Common myeloid progenitor, CD34-positive (primary cell): ENCODE measurements at regions of chr19 and their contacts with region 1.

Region 1: DNA sequence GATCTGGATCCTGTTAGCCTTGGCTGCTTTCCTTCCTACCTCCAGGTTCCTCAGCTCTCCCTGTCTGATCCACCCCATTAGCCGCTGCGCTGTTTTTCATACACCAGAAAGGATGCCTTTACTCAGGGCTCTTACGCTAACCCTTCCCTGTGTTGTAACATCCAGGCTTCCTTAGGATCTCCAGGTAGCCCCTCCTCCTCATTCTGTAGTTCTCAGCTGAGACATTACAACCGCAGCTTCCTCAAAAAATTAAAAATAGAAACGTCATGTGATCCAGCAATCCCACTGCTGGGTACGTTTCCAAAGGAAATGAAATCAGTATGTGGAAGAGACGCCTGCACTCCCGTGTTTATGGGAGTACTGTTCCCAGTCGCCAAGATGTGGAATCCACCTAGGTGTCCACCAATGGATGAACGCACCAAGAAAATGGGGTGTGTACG is 18.4 kb upstream of the MYADM start:
- DNase-seq: peak in 2 of 3 donors; percentile 61 to 66
- H3K4me3 ChIP-seq: peak overlapping the region in 2 of 7 experiments; percentile 26 to 36
- H3K27ac ChIP-seq: no peak overlapping the region
- H3K4me1 ChIP-seq: peaks cover 10 to 21% (median 13%) of the 10 kb centered on the region in 4 experiments
- H3K27me3 ChIP-seq: peaks cover 0 to 23% (median 3%) of the 10 kb centered on the region in 5 experiments

Region 2: GRCh38 chr19:53707277-53707676 is 142.0 kb before region 1 on chr19:
- CTCF ChIA-PET with region 1: no interaction called
- POLR2A ChIA-PET with region 1: no interaction called
- DNase-seq: no peak
- H3K4me3 ChIP-seq: no peak overlapping the region
- H3K27ac ChIP-seq: no peak overlapping the region
- H3K4me1 ChIP-seq: no peaks in the 10 kb centered on the region
- H3K27me3 ChIP-seq: peaks cover 0 to 6% (median 0%) of the 10 kb centered on the region in 5 experiments

Region 3: DNA sequence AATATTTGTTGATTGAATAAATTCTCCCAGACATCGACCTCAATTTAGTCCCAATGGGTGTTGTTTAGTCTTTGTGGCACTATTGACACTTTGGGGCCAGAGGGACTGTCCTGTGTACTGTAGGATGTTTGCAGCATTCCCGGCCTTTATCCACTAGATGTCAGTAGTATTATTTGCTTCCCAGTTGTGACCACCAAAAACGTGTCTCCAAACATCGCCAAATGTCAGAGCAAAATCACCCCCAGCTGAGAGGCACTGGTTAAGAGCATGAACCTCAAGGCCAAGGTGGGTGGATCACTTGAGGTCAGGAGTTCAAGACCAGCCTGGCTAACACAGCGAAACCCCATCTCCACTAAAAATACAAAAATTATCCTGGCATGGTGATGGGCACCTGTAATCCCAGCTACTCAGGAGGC is 40.5 kb before region 1 on chr19:
- CTCF ChIA-PET with region 1: no interaction called
- POLR2A ChIA-PET with region 1: no interaction called
- DNase-seq: peak; percentile 37 to 65 (median 64)
- H3K4me3 ChIP-seq: no peak overlapping the region
- H3K27ac ChIP-seq: no peak overlapping the region
- H3K4me1 ChIP-seq: no peaks in the 10 kb centered on the region
- H3K27me3 ChIP-seq: no peaks in the 10 kb centered on the region

Region 4: DNA sequence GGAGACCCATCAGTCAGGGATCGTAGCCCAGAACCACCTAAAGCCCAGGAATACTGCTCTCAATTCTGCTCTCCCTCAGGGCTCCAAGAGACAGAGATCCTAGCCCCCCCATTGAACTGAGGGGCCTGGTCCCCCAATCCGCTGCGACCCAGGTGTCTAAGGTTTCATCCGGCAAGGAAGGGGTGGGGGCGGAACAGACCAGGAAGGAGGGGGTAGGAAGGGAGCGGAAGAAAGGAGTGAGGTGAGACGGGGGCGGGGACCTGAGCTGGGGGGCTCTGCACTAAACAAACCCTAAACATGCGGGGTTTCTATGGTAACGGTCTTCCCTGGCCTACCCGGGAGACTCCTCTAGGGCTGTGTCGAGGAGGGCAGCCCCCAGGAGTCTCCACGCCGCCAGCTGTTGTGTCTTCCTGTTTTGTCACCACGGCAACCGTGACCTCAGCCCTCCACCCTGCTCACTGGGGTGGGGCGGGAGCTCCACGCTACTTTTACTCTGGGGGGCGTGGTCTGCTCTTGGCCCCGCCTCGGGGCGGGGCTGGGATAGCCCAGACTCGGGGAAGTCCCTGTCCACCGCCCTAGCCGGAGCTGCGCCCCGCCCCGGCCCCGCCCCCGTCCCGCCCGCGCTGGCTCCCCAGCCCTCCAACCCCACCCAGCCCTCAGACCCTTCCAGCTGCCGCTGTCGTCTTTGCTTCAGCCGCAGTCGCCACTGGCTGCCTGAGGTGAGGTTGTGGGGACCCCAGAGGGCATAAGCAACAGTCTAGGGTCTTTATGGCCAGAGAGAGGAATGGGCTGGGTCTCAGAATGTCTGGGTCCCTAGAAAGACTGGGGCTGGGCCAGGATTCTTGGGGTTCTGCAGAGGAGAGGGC is 18.2 kb after region 1 on chr19 and contains the start of gene MYADM:
- CTCF ChIA-PET with region 1: interaction called, 12 read pairs
- POLR2A ChIA-PET with region 1: interaction called, 9 read pairs
- DNase-seq: peak; percentile 100
- H3K4me3 ChIP-seq: peak within 1 kb of the TSS; percentile 75 to 100 (median 96)
- H3K27ac ChIP-seq: peak within 1 kb of the TSS; percentile 96 to 99
- H3K4me1 ChIP-seq: peaks cover 5 to 52% (median 41%) of the 10 kb centered on the region in 4 experiments
- H3K27me3 ChIP-seq: no peaks in the 10 kb centered on the region

Region 5: GRCh38 chr19:53881482-53882390 is 32.5 kb after region 1 on chr19 and contains the start of gene PRKCG:
- CTCF ChIA-PET with region 1: interaction called, 11 read pairs
- POLR2A ChIA-PET with region 1: no interaction called
- DNase-seq: peak; percentile 68 to 76 (median 72)
- H3K4me3 ChIP-seq: peak within 1 kb of the TSS in 5 of 7 experiments; percentile 8 to 64 (median 19)
- H3K27ac ChIP-seq: no peak within 1 kb of the TSS
- H3K4me1 ChIP-seq: peaks cover 9 to 30% (median 26%) of the 10 kb centered on the region in 4 experiments
- H3K27me3 ChIP-seq: peaks cover 9 to 70% (median 36%) of the 10 kb centered on the region in 5 experiments

Region 6: GRCh38 chr19:53958168-53958571 is 108.9 kb after region 1 on chr19:
- CTCF ChIA-PET with region 1: no interaction called
- POLR2A ChIA-PET with region 1: no interaction called
- DNase-seq: no peak
- H3K4me3 ChIP-seq: no peak overlapping the region
- H3K27ac ChIP-seq: no peak overlapping the region
- H3K4me1 ChIP-seq: peaks cover 0 to 6% (median 1%) of the 10 kb centered on the region in 4 experiments
- H3K27me3 ChIP-seq: peaks cover 4 to 77% (median 34%) of the 10 kb centered on the region in 5 experiments

Region 7: GRCh38 chr19:54023191-54023590 is 173.9 kb after region 1 on chr19:
- CTCF ChIA-PET with region 1: interaction called, 13 read pairs
- POLR2A ChIA-PET with region 1: no interaction called
- DNase-seq: no peak
- H3K4me3 ChIP-seq: no peak overlapping the region
- H3K27ac ChIP-seq: no peak overlapping the region
- H3K4me1 ChIP-seq: peaks cover 6 to 32% (median 22%) of the 10 kb centered on the region in 4 experiments
- H3K27me3 ChIP-seq: no peaks in the 10 kb centered on the region